ENCODE measurements at regions of chr15 and their contacts with region 1.

Region 1: GRCh38 chr15:73697033-73697467 is 12.9 kb downstream of the CD276 start:
- DNase-seq: peak; percentile 93
- H3K27ac ChIP-seq: peak overlapping the region; percentile 84
- CTCF ChIP-seq: no peak

Region 2: DNA sequence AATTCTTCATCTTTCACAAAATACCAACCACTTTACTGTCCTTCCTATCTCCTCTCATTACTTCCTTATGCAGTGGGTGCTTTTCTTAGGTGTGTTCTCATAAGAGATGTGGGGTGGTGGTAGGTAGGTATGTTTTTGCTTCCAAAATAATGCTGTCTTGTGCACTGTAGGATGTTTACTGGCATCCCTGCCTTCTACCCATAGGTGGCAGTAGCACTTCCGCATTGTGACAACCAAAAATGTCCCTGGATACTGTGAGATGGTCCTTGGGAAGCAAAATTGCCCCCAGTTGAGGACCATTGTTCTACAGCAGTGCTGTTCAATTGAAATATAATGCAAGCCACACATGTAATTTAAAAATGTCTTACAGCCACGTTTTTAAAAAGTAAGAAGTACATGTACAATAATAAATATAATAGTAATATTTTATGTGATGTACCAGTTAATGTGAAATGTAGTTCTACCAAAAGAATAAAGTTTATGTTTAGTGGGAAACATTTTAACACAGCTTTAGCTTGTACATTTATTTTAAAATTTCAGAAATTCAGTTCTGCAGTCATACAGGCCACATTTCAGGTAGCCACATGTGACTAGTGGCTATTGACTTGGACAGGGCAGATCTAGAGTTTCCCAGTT is 569.6 kb before region 1 on chr15:
- CTCF ChIA-PET with region 1: interaction called, 10 read pairs
- POLR2A ChIA-PET with region 1: no interaction called
- DNase-seq: peak; percentile 16
- H3K27ac ChIP-seq: no peak overlapping the region
- CTCF ChIP-seq: peak; percentile 78

Region 3: DNA sequence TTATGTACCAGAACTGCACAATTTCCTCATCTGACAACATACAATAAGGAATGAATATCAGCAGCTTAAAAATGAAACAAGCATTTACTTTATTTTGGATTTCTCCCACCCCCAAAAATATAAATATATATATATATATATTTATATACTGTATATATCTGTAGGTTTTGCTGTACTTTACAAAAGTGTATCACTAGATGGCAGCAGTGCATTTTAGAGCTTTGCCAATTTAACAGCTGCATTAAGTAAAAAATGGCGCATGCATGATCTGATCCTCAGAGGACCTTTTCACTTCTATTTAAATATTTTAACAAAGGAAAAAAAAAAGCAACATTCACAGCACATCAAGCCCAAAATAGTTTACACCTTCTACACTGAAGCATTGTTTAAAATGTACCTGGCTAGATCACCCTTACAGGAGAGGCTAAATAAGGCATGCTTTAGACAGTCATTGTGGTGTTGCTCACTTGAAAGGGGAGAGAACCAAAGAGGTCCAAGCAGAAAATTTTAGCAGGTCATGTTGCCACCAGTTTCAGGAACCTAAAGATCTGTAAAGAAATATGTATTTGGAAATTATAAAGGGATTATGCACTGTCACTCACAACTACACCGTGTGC is 136.4 kb before region 1 on chr15:
- CTCF ChIA-PET with region 1: interaction called, 33 read pairs
- POLR2A ChIA-PET with region 1: no interaction called
- DNase-seq: peak; percentile 41
- H3K27ac ChIP-seq: no peak overlapping the region
- CTCF ChIP-seq: peak; percentile 50; the same call in 1 of the 2 replicates

Region 4: GRCh38 chr15:73794443-73795133 is 97.5 kb after region 1 on chr15:
- CTCF ChIA-PET with region 1: no interaction called
- POLR2A ChIA-PET with region 1: no interaction called
- DNase-seq: no peak
- H3K27ac ChIP-seq: no peak overlapping the region
- CTCF ChIP-seq: no peak

Region 5: DNA sequence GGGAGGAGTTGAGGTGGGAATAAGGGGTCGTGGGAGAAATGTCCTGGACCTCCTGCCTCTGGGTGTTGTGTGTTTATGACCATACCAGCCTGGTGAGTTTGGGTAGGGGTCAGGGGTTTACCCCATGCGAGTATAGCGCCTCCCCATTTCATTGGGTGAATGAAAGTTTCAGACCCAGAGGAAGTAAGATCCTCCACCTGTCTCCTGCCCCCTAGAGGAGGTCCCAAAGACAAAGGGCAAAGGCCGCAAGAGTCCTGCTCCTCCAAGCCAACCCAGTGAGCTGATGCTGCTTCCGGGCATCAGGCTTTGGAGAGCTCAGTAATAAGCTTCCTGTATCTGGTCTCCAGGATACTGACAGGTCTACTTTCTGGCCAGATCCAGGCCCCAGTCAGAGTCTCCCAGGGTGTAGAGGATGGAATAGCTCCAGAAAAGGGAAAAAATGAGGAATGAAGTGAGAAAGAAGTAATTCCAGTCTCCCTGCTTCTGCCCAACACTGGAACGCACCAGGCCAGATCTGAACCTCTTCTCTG is 169.9 kb after region 1 on chr15:
- CTCF ChIA-PET with region 1: no interaction called
- POLR2A ChIA-PET with region 1: no interaction called
- DNase-seq: no peak
- H3K27ac ChIP-seq: no peak overlapping the region
- CTCF ChIP-seq: no peak